CD14-positive monocyte (primary cell): ENCODE measurements at regions of chr19 and their contacts with region 1.

Region 1: GRCh38 chr19:3146677-3147100 is 10.9 kb downstream of the GNA15 start:
- DNase-seq: peak; percentile 46 to 67 (median 48)
- H3K4me3 ChIP-seq: no peak overlapping the region
- H3K4me3 Mint-ChIP-seq: peak overlapping the region in 1 of 2 donors; percentile 39
- H3K27ac ChIP-seq: peak overlapping the region; percentile 67 to 84
- H3K27ac Mint-ChIP-seq: peak overlapping the region; percentile 46 to 95 (median 86)
- H3K4me1 ChIP-seq: peaks cover 42 to 46% of the 10 kb centered on the region in 2 donors
- H3K4me1 Mint-ChIP-seq: peaks cover 35% of the 10 kb centered on the region
- H3K27me3 ChIP-seq: no peaks in the 10 kb centered on the region
- H3K27me3 Mint-ChIP-seq: peaks cover 0 to 4% (median 0%) of the 10 kb centered on the region in 3 donors
- CTCF ChIP-seq: peak; percentile 99

Region 2: DNA sequence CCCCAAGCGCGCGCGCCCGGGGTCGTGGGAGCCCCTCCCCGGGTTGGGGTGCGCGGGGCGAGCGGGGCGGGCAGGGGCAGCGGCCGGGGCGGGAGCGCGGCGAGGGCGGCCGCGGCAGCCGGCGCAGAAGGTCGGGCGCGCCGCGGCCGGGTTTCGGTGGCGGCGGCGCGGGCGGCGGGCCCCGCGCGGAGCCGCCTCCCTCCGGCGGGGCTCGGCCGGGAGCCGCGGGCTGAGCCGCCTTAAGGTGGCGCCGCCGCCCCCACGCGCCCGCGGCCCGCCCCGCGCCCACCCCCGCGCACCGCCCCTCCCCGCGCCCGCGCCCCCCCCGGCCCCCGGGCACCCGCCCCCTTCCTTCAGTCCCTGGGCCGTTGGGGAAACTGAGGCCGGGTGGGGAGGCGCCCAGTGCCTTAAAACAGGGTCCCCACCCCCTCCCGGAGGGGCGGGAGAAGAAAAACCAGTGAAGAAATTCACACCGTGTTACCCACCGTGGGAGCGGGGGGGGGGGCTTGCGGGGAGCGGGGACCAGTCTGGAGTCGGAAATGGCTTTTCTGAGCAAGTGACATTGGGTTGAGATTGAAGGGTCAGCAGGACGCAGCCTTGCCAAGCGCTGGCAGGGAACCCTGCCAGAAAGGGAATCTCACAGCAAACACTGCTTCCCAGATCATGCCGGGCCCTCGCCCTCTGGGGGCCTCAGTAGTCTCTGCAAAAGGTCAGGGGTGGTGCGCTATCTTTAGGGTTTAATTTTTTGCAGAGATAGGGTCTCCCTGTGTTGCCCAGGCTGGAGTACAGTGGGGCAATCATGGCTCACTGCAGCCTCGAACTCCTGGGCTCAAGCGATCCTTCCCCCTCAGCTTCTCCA is 117.4 kb before region 1 on chr19 and contains the start of gene TLE2:
- intact Hi-C with region 1: no loop called
- DNase-seq: no peak
- H3K4me3 ChIP-seq: no peak within 1 kb of the TSS
- H3K4me3 Mint-ChIP-seq: peak within 1 kb of the TSS; percentile 31 to 81
- H3K27ac ChIP-seq: no peak within 1 kb of the TSS
- H3K27ac Mint-ChIP-seq: no peak within 1 kb of the TSS
- H3K4me1 ChIP-seq: peaks cover 3 to 4% of the 10 kb centered on the region in 2 donors
- H3K4me1 Mint-ChIP-seq: peaks cover 1% of the 10 kb centered on the region
- H3K27me3 ChIP-seq: peaks cover 47 to 90% of the 10 kb centered on the region in 2 donors
- H3K27me3 Mint-ChIP-seq: peaks cover 79 to 96% (median 96%) of the 10 kb centered on the region in 3 donors
- CTCF ChIP-seq: no peak
- polyA plus RNA-seq, gene TLE2: not detected

Region 3: DNA sequence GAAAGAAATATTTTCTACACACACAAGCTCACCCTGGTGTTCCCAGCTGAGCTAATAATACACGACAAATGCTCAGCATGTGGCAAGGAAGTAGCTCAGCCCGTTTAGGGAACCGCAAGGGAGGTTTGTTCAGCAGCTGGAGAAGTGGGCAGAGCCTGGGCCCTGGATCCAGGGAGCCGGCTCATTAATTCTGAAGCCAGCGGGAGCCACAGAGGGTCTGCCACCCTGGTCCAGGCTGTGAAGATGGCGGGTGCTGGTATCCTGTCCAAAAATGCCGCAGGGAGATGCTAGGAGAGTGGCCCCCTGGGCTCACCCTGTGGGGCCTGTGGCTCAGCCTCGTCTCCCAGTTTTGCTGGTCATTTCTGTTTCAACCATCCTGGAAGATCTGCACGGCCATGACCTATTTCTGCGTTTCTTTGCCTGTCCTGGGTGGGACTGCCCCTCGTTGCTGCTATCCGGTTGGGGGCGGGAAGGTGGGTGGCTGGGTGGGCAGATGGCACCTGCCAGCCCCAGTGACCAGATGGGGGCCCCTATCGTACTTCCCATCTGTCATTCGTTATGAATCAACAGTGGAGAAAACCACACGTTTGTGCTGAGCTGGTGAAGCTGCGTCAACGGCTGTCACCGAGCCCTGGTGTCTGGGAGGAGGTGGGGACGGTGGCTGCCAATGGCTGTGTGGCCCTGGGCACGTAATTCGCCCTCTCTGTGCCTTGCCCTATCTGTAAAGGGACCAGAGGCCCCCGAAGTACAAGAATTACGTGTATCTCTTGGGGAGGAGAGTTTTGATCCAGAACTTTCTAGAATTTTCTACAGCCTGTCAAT is 13.5 kb before region 1 on chr19:
- intact Hi-C with region 1: loop called in 1 of 2 experiments (anchors 1 kb)
- DNase-seq: peak; percentile 85 to 89 (median 89)
- H3K4me3 ChIP-seq: peak overlapping the region; percentile 5 to 57 (median 9)
- H3K4me3 Mint-ChIP-seq: peak overlapping the region; percentile 62 to 84
- H3K27ac ChIP-seq: peak overlapping the region; percentile 88 to 94
- H3K27ac Mint-ChIP-seq: peak overlapping the region; percentile 94 to 98 (median 98)
- H3K4me1 ChIP-seq: peaks cover 45 to 46% of the 10 kb centered on the region in 2 donors
- H3K4me1 Mint-ChIP-seq: peaks cover 39% of the 10 kb centered on the region
- H3K27me3 ChIP-seq: no peaks in the 10 kb centered on the region
- H3K27me3 Mint-ChIP-seq: no peaks in the 10 kb centered on the region
- CTCF ChIP-seq: no peak

Region 4: DNA sequence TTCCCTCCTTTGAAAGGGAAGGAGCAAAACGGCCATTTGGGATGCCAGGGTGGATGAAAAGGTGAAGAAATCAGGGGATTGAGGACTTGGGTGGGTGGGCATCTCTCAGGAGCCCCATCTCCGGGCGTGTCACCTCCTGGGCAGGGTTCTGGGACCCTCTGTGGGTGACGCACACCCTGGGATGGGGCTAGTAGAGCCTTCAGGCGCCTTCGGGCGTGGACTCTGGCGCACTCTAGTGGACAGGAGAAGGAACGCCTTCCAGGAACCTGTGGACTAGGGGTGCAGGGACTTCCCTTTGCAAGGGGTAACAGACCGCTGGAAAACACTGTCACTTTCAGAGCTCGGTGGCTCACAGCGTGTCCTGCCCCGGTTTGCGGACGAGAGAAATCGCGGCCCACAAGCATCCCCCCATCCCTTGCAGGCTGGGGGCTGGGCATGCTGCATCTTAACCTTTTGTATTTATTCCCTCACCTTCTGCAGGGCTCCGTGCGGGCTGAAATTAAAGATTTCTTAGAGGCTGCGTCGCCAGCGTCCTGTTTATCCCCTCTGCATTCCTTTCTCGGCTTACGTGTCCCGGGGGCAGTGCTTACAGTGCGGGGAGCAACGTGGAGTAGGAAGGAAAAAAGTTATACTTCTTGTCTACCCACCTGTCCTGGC is 16.7 kb after region 1 on chr19:
- intact Hi-C with region 1: loop called in 1 of 2 experiments (anchors 2 kb)
- DNase-seq: peak; percentile 66 to 74 (median 74)
- H3K4me3 ChIP-seq: peak overlapping the region in 1 of 3 experiments; percentile 23
- H3K4me3 Mint-ChIP-seq: peak overlapping the region in 1 of 2 donors; percentile 51
- H3K27ac ChIP-seq: peak overlapping the region in 1 of 2 donors; percentile 98
- H3K27ac Mint-ChIP-seq: peak overlapping the region; percentile 66 to 99 (median 88)
- H3K4me1 ChIP-seq: peaks cover 42 to 49% of the 10 kb centered on the region in 2 donors
- H3K4me1 Mint-ChIP-seq: peaks cover 53% of the 10 kb centered on the region
- H3K27me3 ChIP-seq: no peaks in the 10 kb centered on the region
- H3K27me3 Mint-ChIP-seq: peaks cover 0 to 2% (median 2%) of the 10 kb centered on the region in 3 donors
- CTCF ChIP-seq: peak; percentile 98

Region 5: GRCh38 chr19:3176603-3177501 is 30.2 kb after region 1 on chr19:
- intact Hi-C with region 1: loop called (anchors 5 kb)
- DNase-seq: peak; percentile 51 to 78 (median 63)
- H3K4me3 ChIP-seq: peak overlapping the region in 2 of 3 experiments; percentile 7 to 51
- H3K4me3 Mint-ChIP-seq: peak overlapping the region; percentile 48 to 68
- H3K27ac ChIP-seq: peak overlapping the region; percentile 17 to 65
- H3K27ac Mint-ChIP-seq: peak overlapping the region; percentile 31 to 89 (median 73)
- H3K4me1 ChIP-seq: peaks cover 48 to 65% of the 10 kb centered on the region in 2 donors
- H3K4me1 Mint-ChIP-seq: peaks cover 39% of the 10 kb centered on the region
- H3K27me3 ChIP-seq: no peaks in the 10 kb centered on the region
- H3K27me3 Mint-ChIP-seq: peaks cover 0 to 10% (median 0%) of the 10 kb centered on the region in 3 donors
- CTCF ChIP-seq: no peak

Region 6: GRCh38 chr19:3185482-3186376 is 39.0 kb after region 1 on chr19 and contains the start of gene NCLN:
- intact Hi-C with region 1: loop called in 1 of 2 experiments (anchors 5 kb)
- DNase-seq: peak; percentile 88 to 92 (median 89)
- H3K4me3 ChIP-seq: peak within 1 kb of the TSS; percentile 53 to 79 (median 78)
- H3K4me3 Mint-ChIP-seq: peak within 1 kb of the TSS; percentile 95 to 98
- H3K27ac ChIP-seq: peak within 1 kb of the TSS; percentile 54 to 82
- H3K27ac Mint-ChIP-seq: peak within 1 kb of the TSS; percentile 94 to 100 (median 99)
- H3K4me1 ChIP-seq: peaks cover 76 to 84% of the 10 kb centered on the region in 2 donors
- H3K4me1 Mint-ChIP-seq: peaks cover 72% of the 10 kb centered on the region
- H3K27me3 ChIP-seq: no peaks in the 10 kb centered on the region
- H3K27me3 Mint-ChIP-seq: peaks cover 0 to 2% (median 0%) of the 10 kb centered on the region in 3 donors
- CTCF ChIP-seq: no peak
- polyA plus RNA-seq, gene NCLN: 28.6 to 60.9 (median 34.5) TPM

Region 7: GRCh38 chr19:3210347-3211017 is 63.8 kb after region 1 on chr19:
- intact Hi-C with region 1: loop called in 1 of 2 experiments (anchors 2 kb)
- DNase-seq: peak; percentile 33 to 61 (median 54)
- H3K4me3 ChIP-seq: no peak overlapping the region
- H3K4me3 Mint-ChIP-seq: no peak overlapping the region
- H3K27ac ChIP-seq: no peak overlapping the region
- H3K27ac Mint-ChIP-seq: peak overlapping the region in 1 of 7 donors; percentile 30
- H3K4me1 ChIP-seq: no peaks in the 10 kb centered on the region
- H3K4me1 Mint-ChIP-seq: no peaks in the 10 kb centered on the region
- H3K27me3 ChIP-seq: no peaks in the 10 kb centered on the region
- H3K27me3 Mint-ChIP-seq: peaks cover 0 to 2% (median 1%) of the 10 kb centered on the region in 3 donors
- CTCF ChIP-seq: peak; percentile 88